Body of pancreas (tissue), 4 donors: ENCODE measurements at regions of chr15 and their contacts with region 1.

Region 1: DNA sequence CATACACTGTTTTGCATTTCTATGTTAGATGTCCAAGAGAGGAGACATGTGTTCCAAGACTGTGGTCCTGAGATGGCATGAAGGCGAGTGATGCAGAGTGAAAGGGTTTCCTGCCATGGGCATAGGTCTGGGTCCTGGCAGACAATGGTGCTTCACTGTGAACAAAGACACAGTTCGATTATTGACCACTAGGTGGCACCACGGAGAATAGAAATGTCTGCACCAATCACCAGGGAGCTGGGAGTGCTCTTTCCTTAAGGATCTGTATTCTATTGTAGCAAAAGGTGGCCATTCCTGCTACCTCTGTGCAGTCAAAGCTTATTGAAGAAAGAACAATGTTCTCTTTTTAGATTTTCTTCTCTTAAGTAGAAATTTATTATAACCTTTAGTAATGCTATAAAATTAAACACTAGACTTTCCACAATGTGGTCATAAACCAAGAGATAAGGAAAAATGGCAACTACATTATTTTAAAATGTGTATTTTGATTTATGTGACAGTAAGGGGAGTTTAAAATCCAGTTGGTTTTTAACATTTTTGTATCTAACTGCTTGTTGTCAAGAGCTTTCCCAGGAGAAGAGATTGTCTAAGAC is 88.7 kb downstream of the GABRG3 start:
- DNase-seq: peak; percentile 42 to 62 (median 52)
- ATAC-seq: peak; percentile 63
- H3K4me3 ChIP-seq: no peak overlapping the region
- H3K27ac ChIP-seq: no peak overlapping the region
- H3K4me1 ChIP-seq: no peaks in the 10 kb centered on the region
- H3K27me3 ChIP-seq: no peaks in the 10 kb centered on the region
- CTCF ChIP-seq: peak; percentile 28 to 55 (median 46)
- POLR2A ChIP-seq: no peak

Region 2: DNA sequence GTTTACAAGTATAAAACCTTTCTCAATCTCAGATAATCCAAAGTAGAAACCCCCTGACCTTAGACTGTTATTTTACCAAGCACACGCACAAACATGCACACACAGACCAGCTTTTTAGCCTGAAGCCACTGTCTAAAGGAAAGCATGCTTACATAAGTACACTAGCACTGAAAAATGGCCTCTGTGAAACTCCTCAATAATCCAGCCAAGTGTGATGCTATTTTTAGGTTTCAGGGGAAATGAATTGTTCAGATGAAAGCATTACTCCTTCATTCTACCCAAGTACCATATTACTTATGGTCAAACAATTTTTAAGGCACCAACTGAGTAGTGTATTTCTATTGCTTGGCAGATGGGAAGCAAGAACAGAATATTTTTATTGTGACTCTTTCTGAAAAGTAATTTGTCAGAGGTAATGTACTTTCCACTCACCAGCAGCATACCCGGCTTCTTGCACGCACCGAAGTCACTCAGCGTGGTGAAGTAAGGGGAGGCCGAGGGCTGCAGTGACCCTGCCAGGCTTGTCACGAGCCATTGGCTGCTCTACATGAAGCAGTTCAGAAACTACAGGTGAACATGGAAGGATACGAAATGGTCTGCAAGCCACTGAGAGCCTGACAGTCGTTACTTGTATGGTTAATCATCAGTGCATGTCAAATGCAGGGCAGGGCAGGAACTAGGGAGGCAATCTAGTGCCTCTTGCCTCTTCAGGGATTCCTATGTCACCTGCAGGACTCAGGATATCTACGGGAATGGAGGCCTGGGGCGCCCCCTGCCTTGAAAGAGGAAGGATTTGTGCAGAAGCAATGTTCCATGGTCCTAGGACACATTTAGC is 393.5 kb before region 1 on chr15:
- intact Hi-C with region 1: no loop called
- DNase-seq: no peak
- ATAC-seq: no peak
- H3K4me3 ChIP-seq: no peak overlapping the region
- H3K27ac ChIP-seq: no peak overlapping the region
- H3K4me1 ChIP-seq: peaks cover 5% of the 10 kb centered on the region
- H3K27me3 ChIP-seq: no peaks in the 10 kb centered on the region
- CTCF ChIP-seq: no peak
- POLR2A ChIP-seq: no peak

Region 3: GRCh38 chr15:26996250-26996649 is 63.5 kb before region 1 on chr15:
- intact Hi-C with region 1: no loop called
- DNase-seq: no peak
- ATAC-seq: no peak
- H3K4me3 ChIP-seq: no peak overlapping the region
- H3K27ac ChIP-seq: no peak overlapping the region
- H3K4me1 ChIP-seq: no peaks in the 10 kb centered on the region
- H3K27me3 ChIP-seq: no peaks in the 10 kb centered on the region
- CTCF ChIP-seq: no peak
- POLR2A ChIP-seq: no peak

Region 4: GRCh38 chr15:27119695-27120266 is 60.1 kb after region 1 on chr15:
- intact Hi-C with region 1: loop called (anchors 10 kb)
- DNase-seq: no peak
- ATAC-seq: no peak
- H3K4me3 ChIP-seq: no peak overlapping the region
- H3K27ac ChIP-seq: no peak overlapping the region
- H3K4me1 ChIP-seq: no peaks in the 10 kb centered on the region
- H3K27me3 ChIP-seq: no peaks in the 10 kb centered on the region
- CTCF ChIP-seq: no peak
- POLR2A ChIP-seq: no peak

Region 5: DNA sequence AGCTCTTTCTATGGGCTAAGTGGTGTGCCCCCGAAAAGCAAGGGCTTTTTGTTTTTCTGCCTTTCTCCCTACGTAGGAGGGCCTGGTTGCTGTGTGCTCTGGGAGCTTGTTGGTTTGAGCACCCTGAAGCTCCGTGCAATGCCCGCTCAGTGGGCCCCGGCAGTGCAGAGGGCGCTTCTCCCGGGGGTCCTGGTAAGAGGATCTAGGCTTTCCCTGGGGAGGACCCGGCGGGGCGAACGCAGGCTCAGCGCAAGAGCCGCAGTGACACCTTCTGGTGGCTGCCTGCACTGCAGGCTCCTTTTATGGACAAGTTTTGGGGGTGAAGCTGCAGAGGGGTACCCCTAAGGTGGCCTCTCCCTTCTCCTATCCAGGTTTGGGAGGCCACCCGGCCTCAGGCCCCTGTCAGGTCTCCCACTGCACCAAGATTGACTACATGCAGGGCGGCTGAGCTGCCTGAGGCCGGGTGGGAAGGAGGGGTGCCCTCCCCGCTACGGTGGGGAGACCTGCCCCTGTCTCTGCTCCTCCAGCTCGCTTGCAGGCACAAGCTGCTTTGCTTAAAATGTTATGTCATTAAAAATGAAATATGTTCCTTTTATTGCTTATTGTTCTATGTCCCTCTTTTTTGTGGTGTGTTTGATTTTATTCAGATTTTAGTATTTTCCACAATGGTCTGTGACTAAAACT is 299.2 kb after region 1 on chr15:
- intact Hi-C with region 1: loop called (anchors 10 kb)
- DNase-seq: peak in 3 of 4 donors; percentile 13 to 45 (median 26)
- ATAC-seq: no peak
- H3K4me3 ChIP-seq: no peak overlapping the region
- H3K27ac ChIP-seq: no peak overlapping the region
- H3K4me1 ChIP-seq: peaks cover 3% of the 10 kb centered on the region
- H3K27me3 ChIP-seq: no peaks in the 10 kb centered on the region
- CTCF ChIP-seq: peak; percentile 39 to 63 (median 53)
- POLR2A ChIP-seq: no peak